Caco-2 (cell line): ENCODE measurements at regions of chr20 and their contacts with region 1.

Region 1: DNA sequence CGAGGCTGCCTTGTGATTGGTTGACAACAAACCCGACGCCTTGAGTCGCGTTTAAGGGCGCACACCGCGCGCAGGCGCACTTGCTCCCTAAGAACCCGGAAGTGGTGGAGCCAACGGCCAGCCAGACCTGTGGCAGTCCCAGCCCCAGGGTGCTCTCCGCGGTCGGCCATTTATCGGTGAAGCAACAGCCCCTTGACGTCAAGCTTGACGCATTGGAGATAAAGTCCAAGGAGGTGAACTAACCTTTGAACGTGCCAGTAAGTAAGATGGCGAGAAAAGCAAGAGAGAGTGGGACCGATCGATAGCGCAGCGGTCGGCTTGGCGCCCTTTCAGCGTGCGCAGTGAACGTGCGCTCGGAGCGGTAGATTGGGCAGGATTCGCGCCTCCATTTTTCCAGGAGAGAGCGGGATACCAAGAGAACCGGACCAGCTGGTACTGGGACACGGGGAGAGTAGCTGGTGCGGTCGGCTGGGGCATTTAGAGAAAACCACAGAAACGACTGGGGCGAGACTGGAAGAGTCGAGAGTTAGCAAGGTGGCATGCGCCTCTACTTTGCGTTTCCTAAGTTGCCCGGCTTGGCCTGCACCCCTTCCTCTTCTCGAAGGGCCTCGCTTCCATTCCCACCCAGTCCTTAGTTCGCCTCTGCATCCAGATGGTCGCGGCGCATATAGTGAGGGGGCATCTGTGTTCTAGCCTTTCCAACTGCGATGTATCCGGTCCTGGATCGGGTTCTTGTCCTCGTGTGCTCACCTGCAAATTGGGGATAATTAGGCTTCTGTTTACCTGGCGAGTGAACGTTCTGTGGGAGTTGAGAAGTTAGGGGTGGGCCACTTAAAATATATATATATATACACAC is at the start of gene CSTF1:
- DNase-seq: peak; percentile 100
- H3K4me3 ChIP-seq: peak within 1 kb of the TSS; percentile 80
- H3K4me3 Mint-ChIP-seq: no peak within 1 kb of the TSS
- H3K27ac Mint-ChIP-seq: no peak within 1 kb of the TSS
- H3K4me1 ChIP-seq: peaks cover 13% of the 10 kb centered on the region
- H3K4me1 Mint-ChIP-seq: peaks cover 17% of the 10 kb centered on the region
- H3K27me3 ChIP-seq: no peaks in the 10 kb centered on the region
- H3K27me3 Mint-ChIP-seq: no peaks in the 10 kb centered on the region
- CTCF ChIP-seq: no peak
- total RNA-seq, gene CSTF1: 97.0 and 101 TPM in 2 replicates

Region 2: GRCh38 chr20:56348308-56348700 is 44.2 kb before region 1 on chr20:
- CTCF ChIA-PET with region 1: no interaction called
- POLR2A ChIA-PET with region 1: interaction called, 8 read pairs
- intact Hi-C with region 1: loop called (anchors 1 kb)
- DNase-seq: peak; percentile 59 to 68
- H3K4me3 ChIP-seq: no peak overlapping the region
- H3K4me3 Mint-ChIP-seq: peak overlapping the region; percentile 40
- H3K27ac Mint-ChIP-seq: peak overlapping the region; percentile 6
- H3K4me1 ChIP-seq: peaks cover 16% of the 10 kb centered on the region
- H3K4me1 Mint-ChIP-seq: peaks cover 15% of the 10 kb centered on the region
- H3K27me3 ChIP-seq: no peaks in the 10 kb centered on the region
- H3K27me3 Mint-ChIP-seq: no peaks in the 10 kb centered on the region
- CTCF ChIP-seq: no peak

Region 3: DNA sequence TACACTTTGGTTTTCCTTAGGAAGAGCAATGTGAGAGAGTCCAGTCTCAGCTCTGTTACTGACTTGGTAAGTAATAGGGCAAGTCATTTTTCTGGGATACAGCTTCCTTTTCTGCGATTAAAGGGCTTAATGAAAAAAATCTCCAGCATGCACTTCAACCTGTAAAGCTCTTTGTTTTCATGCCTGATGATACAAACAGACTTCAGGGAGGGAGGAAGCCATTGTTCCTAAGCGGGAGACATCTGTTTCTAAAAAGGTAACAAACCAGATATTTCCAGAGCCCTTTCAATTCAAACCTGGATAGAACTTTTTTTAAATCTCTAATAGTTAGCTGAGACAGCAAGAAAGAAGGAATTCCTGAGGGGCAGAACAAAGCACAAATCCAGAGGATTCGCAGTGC is 14.4 kb after region 1 on chr20:
- CTCF ChIA-PET with region 1: interaction called, 15 read pairs
- POLR2A ChIA-PET with region 1: interaction called, 12 read pairs
- intact Hi-C with region 1: no loop called
- DNase-seq: no peak
- H3K4me3 ChIP-seq: no peak overlapping the region
- H3K4me3 Mint-ChIP-seq: no peak overlapping the region
- H3K27ac Mint-ChIP-seq: peak overlapping the region; percentile 50
- H3K4me1 ChIP-seq: peaks cover 17% of the 10 kb centered on the region
- H3K4me1 Mint-ChIP-seq: peaks cover 13% of the 10 kb centered on the region
- H3K27me3 ChIP-seq: no peaks in the 10 kb centered on the region
- H3K27me3 Mint-ChIP-seq: no peaks in the 10 kb centered on the region
- CTCF ChIP-seq: no peak

Region 4: GRCh38 chr20:56468316-56469082 is 76.0 kb after region 1 on chr20 and contains the start of gene RTF2:
- CTCF ChIA-PET with region 1: interaction called, 4 read pairs
- POLR2A ChIA-PET with region 1: interaction called, 4 read pairs
- intact Hi-C with region 1: loop called (anchors 1 kb)
- DNase-seq: peak; percentile 96 to 99
- H3K4me3 ChIP-seq: peak within 1 kb of the TSS; percentile 67
- H3K4me3 Mint-ChIP-seq: peak within 1 kb of the TSS; percentile 100
- H3K27ac Mint-ChIP-seq: peak within 1 kb of the TSS; percentile 100
- H3K4me1 ChIP-seq: no peaks in the 10 kb centered on the region; the same call in 1 of the 2 replicates
- H3K4me1 Mint-ChIP-seq: peaks cover 10% of the 10 kb centered on the region
- H3K27me3 ChIP-seq: no peaks in the 10 kb centered on the region
- H3K27me3 Mint-ChIP-seq: peaks cover 3% of the 10 kb centered on the region
- CTCF ChIP-seq: no peak
- total RNA-seq, gene RTF2: 146 and 157 TPM in 2 replicates

Region 5: GRCh38 chr20:56629670-56630478 is 237.4 kb after region 1 on chr20:
- CTCF ChIA-PET with region 1: no interaction called
- POLR2A ChIA-PET with region 1: interaction called, 3 read pairs
- intact Hi-C with region 1: loop called (anchors 1 kb)
- DNase-seq: peak; percentile 94 to 95
- H3K4me3 ChIP-seq: peak overlapping the region; percentile 75
- H3K4me3 Mint-ChIP-seq: peak overlapping the region; percentile 79
- H3K27ac Mint-ChIP-seq: peak overlapping the region; percentile 64
- H3K4me1 ChIP-seq: peaks cover 6% of the 10 kb centered on the region; the same call in 1 of the 2 replicates
- H3K4me1 Mint-ChIP-seq: peaks cover 6% of the 10 kb centered on the region
- H3K27me3 ChIP-seq: no peaks in the 10 kb centered on the region
- H3K27me3 Mint-ChIP-seq: no peaks in the 10 kb centered on the region
- CTCF ChIP-seq: peak; percentile 95 to 96